ENCODE measurements at regions of chr7 and their contacts with region 1.

Region 1: GRCh38 chr7:29564496-29565223 is 1.0 kb downstream of the PRR15 start:
- DNase-seq: peak; percentile 96 to 98
- H3K4me3 ChIP-seq: peak overlapping the region; percentile 72
- H3K27ac ChIP-seq: peak overlapping the region; percentile 92
- H3K4me1 ChIP-seq: peaks cover 52% of the 10 kb centered on the region
- H3K27me3 ChIP-seq: no peaks in the 10 kb centered on the region
- CTCF ChIP-seq: 0 out of 2 replicates have a peak, but pooled peaks have one; percentile 17

Region 2: DNA sequence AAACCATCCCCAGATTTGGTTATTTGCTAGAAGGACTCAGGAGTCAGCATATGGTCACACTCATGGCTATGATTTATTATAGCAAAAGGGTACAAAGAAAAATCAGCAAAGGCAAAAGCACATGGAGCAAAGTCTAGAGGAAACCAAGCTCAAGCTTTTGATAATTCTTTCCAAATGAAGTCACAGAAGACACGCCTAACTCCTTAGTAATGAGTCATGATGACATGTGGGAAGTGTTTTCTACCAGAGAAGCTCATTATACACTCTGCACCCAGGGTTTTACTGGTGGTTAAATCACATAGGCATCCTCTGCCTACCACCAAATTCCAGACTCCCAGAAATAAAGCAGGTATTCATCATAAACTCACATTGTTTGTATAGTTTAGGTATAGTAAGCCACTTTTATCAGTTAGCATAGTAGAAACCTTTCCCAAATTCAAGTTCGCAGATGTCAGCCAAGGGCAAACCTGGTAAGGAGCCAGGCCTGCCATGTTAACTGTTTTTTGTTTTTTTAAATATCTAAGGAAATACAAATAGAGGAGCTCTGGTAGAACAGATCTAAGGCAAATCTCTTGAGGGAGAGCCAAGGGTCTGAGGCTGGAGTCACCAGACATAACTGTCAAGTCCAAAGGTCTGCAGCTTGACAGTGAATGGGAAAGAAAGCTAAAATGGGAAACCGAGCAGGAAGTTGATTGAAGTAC is 1886.6 kb before region 1 on chr7:
- CTCF ChIA-PET with region 1: no interaction called
- POLR2A ChIA-PET with region 1: interaction called, 14 read pairs
- intact Hi-C with region 1: no loop called
- DNase-seq: peak; percentile 51 to 98
- H3K4me3 ChIP-seq: peak overlapping the region; percentile 11; the same call in 1 of the 2 replicates
- H3K27ac ChIP-seq: peak overlapping the region; percentile 98
- H3K4me1 ChIP-seq: peaks cover 33% of the 10 kb centered on the region
- H3K27me3 ChIP-seq: no peaks in the 10 kb centered on the region
- CTCF ChIP-seq: no peak

Region 3: DNA sequence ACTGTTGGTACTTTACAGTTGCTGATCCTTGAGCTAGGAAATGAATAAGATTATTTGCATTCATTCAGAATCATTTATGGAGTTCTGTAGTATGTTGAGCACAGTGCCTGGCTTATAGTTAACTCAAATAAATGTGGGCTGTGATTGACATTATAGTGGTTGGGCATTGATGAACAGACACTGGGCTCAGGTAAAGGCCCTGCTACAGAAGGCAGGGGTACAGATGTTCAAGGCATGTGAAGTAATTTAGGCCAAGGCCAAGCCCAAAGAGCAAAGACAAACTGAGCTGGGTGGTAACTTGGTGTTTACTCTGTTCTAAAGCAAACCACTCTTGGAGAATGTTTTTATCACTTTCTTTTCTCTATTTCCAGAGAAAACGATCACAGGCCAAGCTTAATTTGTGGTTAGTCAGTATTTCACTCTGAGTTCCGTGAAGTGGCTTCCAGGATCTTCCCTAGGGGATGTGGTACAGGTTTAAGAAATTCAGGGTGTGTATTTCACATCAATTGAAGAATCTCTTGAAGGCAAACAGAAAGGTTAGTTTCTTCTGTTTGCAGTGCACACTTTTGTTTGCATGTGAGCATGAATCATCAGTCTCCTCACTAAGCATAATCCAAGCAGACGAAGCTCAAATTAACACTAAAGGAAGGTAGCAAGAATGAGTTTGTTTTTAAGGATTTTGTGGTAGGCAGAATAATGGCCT is 114.9 kb before region 1 on chr7:
- CTCF ChIA-PET with region 1: no interaction called
- POLR2A ChIA-PET with region 1: interaction called, 29 read pairs
- intact Hi-C with region 1: no loop called
- DNase-seq: peak in 1 of 2 experiments; percentile 96
- H3K4me3 ChIP-seq: no peak overlapping the region
- H3K27ac ChIP-seq: peak overlapping the region; percentile 66
- H3K4me1 ChIP-seq: peaks cover 38% of the 10 kb centered on the region
- H3K27me3 ChIP-seq: no peaks in the 10 kb centered on the region
- CTCF ChIP-seq: no peak

Region 4: GRCh38 chr7:29609162-29610037 is 44.7 kb after region 1 on chr7:
- CTCF ChIA-PET with region 1: no interaction called
- POLR2A ChIA-PET with region 1: interaction called, 10 read pairs
- intact Hi-C with region 1: loop called (anchors 1 kb)
- DNase-seq: peak; percentile 69 to 93
- H3K4me3 ChIP-seq: peak overlapping the region; percentile 27; the same call in 1 of the 2 replicates
- H3K27ac ChIP-seq: peak overlapping the region; percentile 78
- H3K4me1 ChIP-seq: peaks cover 76% of the 10 kb centered on the region
- H3K27me3 ChIP-seq: no peaks in the 10 kb centered on the region
- CTCF ChIP-seq: peak; percentile 86

Region 5: GRCh38 chr7:29723599-29723998 is 158.9 kb after region 1 on chr7:
- CTCF ChIA-PET with region 1: no interaction called
- POLR2A ChIA-PET with region 1: no interaction called
- intact Hi-C with region 1: loop called (anchors 2 kb)
- DNase-seq: peak in 1 of 2 experiments; percentile 11
- H3K4me3 ChIP-seq: no peak overlapping the region
- H3K27ac ChIP-seq: peak overlapping the region; percentile 58
- H3K4me1 ChIP-seq: peaks cover 30% of the 10 kb centered on the region
- H3K27me3 ChIP-seq: no peaks in the 10 kb centered on the region
- CTCF ChIP-seq: no peak

Region 6: GRCh38 chr7:30859940-30860496 is 1295.4 kb after region 1 on chr7:
- CTCF ChIA-PET with region 1: no interaction called
- POLR2A ChIA-PET with region 1: interaction called, 27 read pairs
- intact Hi-C with region 1: no loop called
- DNase-seq: peak; percentile 53 to 94
- H3K4me3 ChIP-seq: no peak overlapping the region
- H3K27ac ChIP-seq: peak overlapping the region; percentile 55
- H3K4me1 ChIP-seq: peaks cover 26% of the 10 kb centered on the region
- H3K27me3 ChIP-seq: no peaks in the 10 kb centered on the region
- CTCF ChIP-seq: no peak

Measured in PC-9 (cell line).